Dendritic cell treated with granulocyte-macrophage colony-stimulating factor and Interleukin-4, amounts not matched to agents 40 ng/mL and 50 ng/mL, for 4 days (primary cell): ENCODE measurements at regions of chr4 and their contacts with region 1.

Region 1: DNA sequence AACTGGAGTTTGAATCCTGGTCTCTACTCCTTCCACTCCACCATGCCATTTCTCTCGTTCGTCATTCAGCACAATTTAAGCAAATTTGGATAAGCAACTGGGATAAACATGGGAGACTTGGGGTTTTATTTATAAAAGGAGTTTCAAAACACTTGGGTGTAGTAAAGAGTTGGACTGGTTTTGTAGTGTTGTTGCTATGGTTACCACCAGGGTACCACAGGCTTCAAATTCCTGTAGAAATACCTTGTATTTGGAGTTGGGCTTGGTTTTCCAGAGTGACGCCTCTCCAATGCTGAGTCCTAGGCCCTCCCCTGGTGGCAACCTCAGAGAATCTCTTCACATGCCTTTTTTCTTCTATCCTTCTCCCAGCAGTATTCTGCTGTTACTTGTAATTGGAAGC is 27.9 kb upstream of the PHOX2B start:
- H3K4me3 Mint-ChIP-seq: no peak overlapping the region
- H3K27ac Mint-ChIP-seq: no peak overlapping the region
- H3K4me1 Mint-ChIP-seq: no peaks in the 10 kb centered on the region
- H3K27me3 Mint-ChIP-seq: peaks cover 1% of the 10 kb centered on the region

Region 2: GRCh38 chr4:41580007-41580406 is 196.5 kb before region 1 on chr4:
- intact Hi-C with region 1: loop called (anchors 5 kb)
- H3K4me3 Mint-ChIP-seq: no peak overlapping the region
- H3K27ac Mint-ChIP-seq: no peak overlapping the region
- H3K4me1 Mint-ChIP-seq: no peaks in the 10 kb centered on the region
- H3K27me3 Mint-ChIP-seq: peaks cover 2% of the 10 kb centered on the region

Region 3: GRCh38 chr4:42359711-42360110 is 583.2 kb after region 1 on chr4:
- intact Hi-C with region 1: no loop called
- H3K4me3 Mint-ChIP-seq: no peak overlapping the region
- H3K27ac Mint-ChIP-seq: no peak overlapping the region
- H3K4me1 Mint-ChIP-seq: no peaks in the 10 kb centered on the region
- H3K27me3 Mint-ChIP-seq: peaks cover 10% of the 10 kb centered on the region